Activated naive CD4-positive, alpha-beta T cell treated with anti-CD3 and anti-CD28 coated beads for 36 hours (primary cell): ENCODE measurements at regions of chr6 and their contacts with region 1.

Region 1: GRCh38 chr6:56459025-56459810 is 183.5 kb downstream of the DST start:
- DNase-seq: no peak
- H3K4me3 Mint-ChIP-seq: no peak overlapping the region
- H3K27ac Mint-ChIP-seq: no peak overlapping the region
- H3K4me1 Mint-ChIP-seq: peaks cover 21% of the 10 kb centered on the region
- H3K27me3 Mint-ChIP-seq: no peaks in the 10 kb centered on the region

Region 2: DNA sequence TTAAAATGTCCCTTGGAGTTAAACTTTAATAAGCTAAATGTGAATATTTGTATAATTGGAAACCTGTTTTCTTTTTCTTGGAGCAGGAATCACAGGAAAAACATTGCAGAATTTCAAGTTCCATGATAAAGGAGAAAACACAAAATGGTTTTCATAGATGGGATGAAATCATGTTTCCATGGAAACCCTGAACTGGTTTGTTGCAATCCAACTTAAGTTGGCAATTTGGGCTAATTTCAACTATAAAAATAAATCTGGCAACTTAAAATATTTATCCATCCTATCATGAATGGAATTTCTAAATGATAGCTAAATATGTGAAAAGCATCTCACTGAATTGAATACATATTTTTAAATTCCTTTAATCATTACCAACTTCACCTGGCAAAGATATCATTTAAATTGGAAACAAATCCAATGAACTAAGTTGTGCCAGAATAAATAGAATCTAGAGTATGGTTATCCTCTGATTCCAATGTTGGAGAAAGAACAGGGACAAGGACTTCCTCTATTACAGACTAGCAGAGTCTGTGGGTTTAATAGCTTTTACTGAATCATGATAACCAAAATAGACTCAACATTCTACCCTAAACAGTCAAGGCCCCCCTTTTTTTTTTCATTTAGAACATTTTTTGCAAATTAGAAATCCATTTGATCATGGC is 245.0 kb before region 1 on chr6:
- CTCF ChIA-PET with region 1: no interaction called
- intact Hi-C with region 1: no loop called
- DNase-seq: no peak
- H3K4me3 Mint-ChIP-seq: no peak overlapping the region
- H3K27ac Mint-ChIP-seq: no peak overlapping the region
- H3K4me1 Mint-ChIP-seq: no peaks in the 10 kb centered on the region
- H3K27me3 Mint-ChIP-seq: no peaks in the 10 kb centered on the region

Region 3: GRCh38 chr6:56406276-56407269 is 52.6 kb before region 1 on chr6:
- CTCF ChIA-PET with region 1: no interaction called
- intact Hi-C with region 1: loop called (anchors 2 kb)
- DNase-seq: no peak
- H3K4me3 Mint-ChIP-seq: no peak overlapping the region
- H3K27ac Mint-ChIP-seq: no peak overlapping the region
- H3K4me1 Mint-ChIP-seq: peaks cover 6% of the 10 kb centered on the region
- H3K27me3 Mint-ChIP-seq: peaks cover 6% of the 10 kb centered on the region